ENCODE measurements at regions of chr19 and their contacts with region 1.

Region 1: GRCh38 chr19:11435058-11435832 is at the starts of genes ODAD3 and PRKCSH:
- DNase-seq: peak; percentile 99
- ATAC-seq: peak; percentile 98 to 99 (median 98)
- H3K4me3 ChIP-seq: peak within 1 kb of the TSS; percentile 64 to 90 (median 80)
- H3K27ac ChIP-seq: peak within 1 kb of the TSS in 11 of 12 donors; percentile 73 to 86 (median 81)
- H3K4me1 ChIP-seq: peaks cover 0 to 22% (median 17%) of the 10 kb centered on the region in 12 donors
- H3K27me3 ChIP-seq: no peaks in the 10 kb centered on the region
- CTCF ChIP-seq: peak; percentile 69 to 90 (median 87)
- POLR2A ChIP-seq: peak in 1 of 2 donors; percentile 53
- total RNA-seq, gene ODAD3: 0.18 to 0.69 (median 0.31) TPM in 7 of 9 donors, not detected in the others
- total RNA-seq, gene PRKCSH: 69.3 to 210 (median 120) TPM

Region 2: GRCh38 chr19:11324079-11324661 is 111.1 kb before region 1 on chr19:
- intact Hi-C with region 1: no loop called
- DNase-seq: peak; percentile 65 to 84 (median 76)
- ATAC-seq: peak; percentile 79 to 95 (median 91)
- H3K4me3 ChIP-seq: peak overlapping the region in 1 of 12 donors; percentile 12
- H3K27ac ChIP-seq: peak overlapping the region in 11 of 12 donors; percentile 36 to 89 (median 69)
- H3K4me1 ChIP-seq: peaks cover 0 to 59% (median 16%) of the 10 kb centered on the region in 12 donors
- H3K27me3 ChIP-seq: no peaks in the 10 kb centered on the region
- CTCF ChIP-seq: no peak
- POLR2A ChIP-seq: no peak

Region 3: GRCh38 chr19:11346092-11346940 is 88.9 kb before region 1 on chr19 and contains the starts of genes CCDC159 and TMEM205:
- intact Hi-C with region 1: loop called in 1 of 10 experiments (anchors 1 kb)
- DNase-seq: peak; percentile 98 to 99 (median 99)
- ATAC-seq: peak; percentile 92 to 98 (median 97)
- H3K4me3 ChIP-seq: peak within 1 kb of the TSS; percentile 42 to 87 (median 78)
- H3K27ac ChIP-seq: peak within 1 kb of the TSS; percentile 48 to 92 (median 84)
- H3K4me1 ChIP-seq: peaks cover 0 to 32% (median 22%) of the 10 kb centered on the region in 12 donors
- H3K27me3 ChIP-seq: no peaks in the 10 kb centered on the region
- CTCF ChIP-seq: peak in 5 of 12 donors; percentile 12 to 37 (median 25)
- POLR2A ChIP-seq: peak; percentile 17 to 94
- total RNA-seq, gene CCDC159: 13.6 to 26.2 (median 21.9) TPM
- total RNA-seq, gene TMEM205: 68.3 to 372 (median 83.9) TPM

Region 4: DNA sequence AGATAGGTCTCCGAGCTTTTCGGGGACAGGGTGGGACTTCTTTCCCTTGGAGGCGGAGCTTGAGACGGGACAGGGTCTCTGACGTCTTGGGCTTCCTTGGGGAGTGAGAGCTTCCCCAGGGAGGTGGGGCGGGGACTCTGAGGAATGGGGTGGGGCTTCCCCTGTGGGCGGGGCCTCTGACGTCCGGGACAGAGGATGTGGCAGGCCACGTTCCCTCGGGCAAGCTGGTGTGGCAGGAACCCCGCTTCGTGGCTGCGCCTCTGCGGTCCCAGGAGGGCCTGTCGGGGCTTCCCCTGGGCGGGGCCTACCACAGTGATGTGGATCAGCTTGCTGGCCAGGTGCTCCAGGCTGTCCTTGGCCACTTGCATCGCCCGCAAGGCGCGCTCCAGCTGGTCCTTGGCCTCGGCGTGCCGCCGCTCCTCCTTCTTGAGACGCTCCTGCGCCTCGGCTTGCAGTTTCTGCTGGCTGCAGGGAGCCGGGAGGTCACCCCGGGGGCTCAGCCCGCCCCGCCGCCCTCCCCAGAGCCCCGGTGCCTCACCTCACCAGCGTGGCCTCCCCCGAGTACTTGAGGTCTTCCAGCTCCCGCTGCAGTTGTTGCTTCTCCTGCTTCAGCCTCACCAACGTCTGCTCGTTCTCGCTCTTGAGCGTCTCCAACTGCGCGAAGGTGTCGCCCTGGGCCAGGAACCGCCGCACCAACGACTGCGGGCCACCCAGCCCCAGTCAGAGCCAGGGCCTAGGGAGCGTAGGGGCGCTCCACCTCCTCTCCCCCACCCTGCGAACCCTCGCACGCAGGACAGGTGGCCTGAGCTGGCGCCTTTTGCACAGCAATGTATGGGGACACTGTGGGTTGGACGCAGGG is 12.9 kb before region 1 on chr19:
- intact Hi-C with region 1: no loop called
- DNase-seq: peak; percentile 78 to 92 (median 82)
- ATAC-seq: peak; percentile 64 to 87 (median 72)
- H3K4me3 ChIP-seq: peak overlapping the region in 11 of 12 donors; percentile 14 to 59 (median 45)
- H3K27ac ChIP-seq: peak overlapping the region in 8 of 12 donors; percentile 46 to 84 (median 77)
- H3K4me1 ChIP-seq: peaks cover 4 to 48% (median 28%) of the 10 kb centered on the region in 12 donors
- H3K27me3 ChIP-seq: peaks cover 4 to 66% (median 47%) of the 10 kb centered on the region in 9 donors
- CTCF ChIP-seq: no peak
- POLR2A ChIP-seq: no peak

Region 5: GRCh38 chr19:11482384-11483050 is 47.3 kb after region 1 on chr19:
- intact Hi-C with region 1: loop called in 1 of 10 experiments (anchors 10 kb)
- DNase-seq: peak; percentile 80 to 93 (median 85)
- ATAC-seq: peak; percentile 78 to 92 (median 87)
- H3K4me3 ChIP-seq: peak overlapping the region in 11 of 12 donors; percentile 16 to 49 (median 41)
- H3K27ac ChIP-seq: no peak overlapping the region
- H3K4me1 ChIP-seq: peaks cover 0 to 43% (median 22%) of the 10 kb centered on the region in 12 donors
- H3K27me3 ChIP-seq: peaks cover 19 to 59% (median 39%) of the 10 kb centered on the region in 9 donors
- CTCF ChIP-seq: peak; percentile 85 to 96 (median 94)
- POLR2A ChIP-seq: no peak

Measured in heart left ventricle (tissue), 16 donors.